Mammary epithelial cell (primary cell): ENCODE measurements at regions of chr12 and their contacts with region 1.

Region 1: GRCh38 chr12:32302218-32303173 is 96.9 kb upstream of the FGD4 start:
- DNase-seq: peak; percentile 8
- H3K4me3 ChIP-seq: no peak overlapping the region
- H3K27ac ChIP-seq: no peak overlapping the region
- H3K4me1 ChIP-seq: no peaks in the 10 kb centered on the region
- H3K27me3 ChIP-seq: no peaks in the 10 kb centered on the region
- CTCF ChIP-seq: peak; percentile 56 to 78

Region 2: DNA sequence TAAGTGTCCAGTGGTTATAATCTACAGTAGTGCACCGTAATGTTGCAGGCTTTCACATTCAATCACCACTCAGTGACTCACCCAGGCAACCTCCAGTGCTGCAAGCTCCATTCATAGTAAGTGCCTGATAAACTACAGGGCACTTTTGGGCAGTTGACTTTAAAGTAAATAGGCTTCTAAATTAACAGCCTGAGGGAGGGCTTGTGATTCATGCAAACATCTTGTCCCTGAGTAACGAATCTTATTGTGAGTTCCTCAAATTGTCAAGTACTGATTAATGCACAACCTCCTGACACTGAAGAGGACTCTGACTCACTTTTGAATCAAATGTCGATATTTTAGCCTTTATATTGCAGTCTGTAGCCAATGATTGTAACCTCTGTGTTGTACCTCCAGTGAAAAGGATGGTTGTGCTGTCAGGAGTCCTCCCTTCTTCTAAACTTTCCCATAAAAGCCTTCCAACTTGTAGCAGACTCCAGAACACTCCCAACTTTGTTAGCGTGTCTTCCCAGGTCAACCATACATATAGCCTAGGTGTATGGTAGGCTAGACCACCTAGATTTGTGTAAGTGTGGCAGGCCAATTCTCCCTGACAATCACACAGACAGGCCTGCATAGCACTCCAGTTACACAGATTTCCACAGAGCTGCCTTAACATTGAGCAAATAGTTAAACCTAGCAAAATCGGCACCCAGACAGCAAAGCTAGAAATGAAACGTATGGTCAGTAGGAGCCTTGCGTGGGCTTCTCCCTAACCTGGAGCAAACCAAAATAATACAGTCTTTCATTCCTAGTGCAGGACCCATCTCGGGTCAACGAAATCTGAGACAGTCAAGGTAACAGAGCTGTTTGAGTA is 250.7 kb before region 1 on chr12:
- CTCF ChIA-PET with region 1: no interaction called
- dilution Hi-C with region 1: no loop called
- in situ Hi-C with region 1: loop called in 1 of 2 experiments (anchors 25 kb)
- intact Hi-C with region 1: no loop called
- DNase-seq: peak; percentile 99
- H3K4me3 ChIP-seq: no peak overlapping the region
- H3K27ac ChIP-seq: peak overlapping the region; percentile 81
- H3K4me1 ChIP-seq: peaks cover 18% of the 10 kb centered on the region
- H3K27me3 ChIP-seq: no peaks in the 10 kb centered on the region
- CTCF ChIP-seq: no peak

Region 3: DNA sequence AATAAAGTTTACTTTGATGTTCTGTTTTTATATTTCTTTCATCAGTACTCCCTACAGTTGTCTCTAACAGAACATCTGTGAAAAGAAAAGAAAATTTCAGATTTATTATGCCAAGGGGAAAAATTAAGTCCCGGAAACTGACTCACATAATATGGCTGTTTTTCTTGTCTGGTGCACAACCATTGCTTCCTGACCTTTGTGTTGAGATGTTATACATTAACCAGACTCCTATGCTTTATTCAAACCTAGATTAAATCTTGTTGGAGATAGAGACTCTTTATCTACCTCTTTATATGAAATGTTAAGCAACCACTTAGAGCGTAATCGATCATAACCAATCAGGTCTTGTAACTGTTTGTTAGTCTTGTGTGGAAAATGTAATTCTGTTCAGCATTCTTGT is 233.4 kb before region 1 on chr12:
- CTCF ChIA-PET with region 1: no interaction called
- dilution Hi-C with region 1: no loop called
- in situ Hi-C with region 1: loop called (anchors 10 to 25 kb)
- intact Hi-C with region 1: no loop called
- DNase-seq: no peak
- H3K4me3 ChIP-seq: no peak overlapping the region
- H3K27ac ChIP-seq: no peak overlapping the region
- H3K4me1 ChIP-seq: no peaks in the 10 kb centered on the region
- H3K27me3 ChIP-seq: no peaks in the 10 kb centered on the region
- CTCF ChIP-seq: no peak